HepG2 (cell line): ENCODE measurements at regions of chr20 and their contacts with region 1.

Region 1: DNA sequence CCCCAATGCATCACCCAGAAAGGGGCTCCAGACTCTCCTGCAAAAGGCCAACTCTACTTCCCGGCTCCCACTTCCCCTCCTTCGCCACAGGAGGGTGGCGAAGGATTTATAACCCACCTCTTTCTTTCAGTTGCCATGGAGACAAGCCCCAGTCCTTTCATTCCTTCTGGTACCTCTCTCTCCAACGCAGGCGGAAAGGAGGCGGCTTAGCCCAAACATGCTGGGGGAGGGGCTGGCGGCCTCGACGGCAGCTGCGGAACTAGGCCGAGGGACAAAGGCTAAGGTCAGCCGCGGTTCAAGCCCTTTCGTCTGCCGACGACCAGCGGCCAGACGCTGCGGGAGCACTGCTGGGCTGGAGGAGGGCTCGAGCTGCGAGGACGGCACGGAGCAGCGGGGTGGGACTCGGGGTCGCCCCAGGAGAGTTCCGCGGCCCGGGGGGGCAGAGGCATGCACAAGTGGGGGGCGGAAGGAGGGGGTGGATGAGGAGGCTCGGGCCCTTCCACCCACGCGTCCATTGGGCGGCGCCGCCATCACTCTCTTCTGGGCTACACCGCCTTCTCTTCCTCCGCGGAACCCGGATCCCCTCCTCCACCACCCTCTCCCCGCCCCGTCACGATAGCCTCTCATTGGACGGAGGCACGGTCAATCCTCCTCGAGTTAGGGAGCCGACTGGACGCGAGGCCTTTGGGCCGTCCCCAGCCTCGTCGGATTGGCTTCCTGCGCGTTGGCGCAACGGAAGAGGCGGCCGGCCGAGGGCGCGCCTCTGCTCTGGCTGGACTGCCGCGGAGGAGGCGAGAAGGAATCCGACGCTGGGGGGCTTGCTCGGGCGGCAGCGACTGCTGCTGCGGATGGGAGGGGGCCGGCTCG is at the start of gene PANK2:
- DNase-seq: peak; percentile 99
- ATAC-seq: peak; percentile 97
- H3K4me3 ChIP-seq: peak within 1 kb of the TSS; percentile 86 to 94 (median 94)
- H3K27ac ChIP-seq: peak within 1 kb of the TSS; percentile 86
- H3K4me1 ChIP-seq: peaks cover 46% of the 10 kb centered on the region
- H3K27me3 ChIP-seq: no peaks in the 10 kb centered on the region; a peak in 1 of 5 replicates
- CTCF ChIP-seq: peak; percentile 65
- EP300 ChIP-seq: peak in 1 of 2 experiments; percentile 42; a peak in 1 of 4 replicates
- POLR2A ChIP-seq: peak; percentile 88 to 89
- RAD21 ChIP-seq: peak; percentile 78
- total RNA-seq, gene PANK2: 123 and 127 TPM in 2 replicates

Region 2: DNA sequence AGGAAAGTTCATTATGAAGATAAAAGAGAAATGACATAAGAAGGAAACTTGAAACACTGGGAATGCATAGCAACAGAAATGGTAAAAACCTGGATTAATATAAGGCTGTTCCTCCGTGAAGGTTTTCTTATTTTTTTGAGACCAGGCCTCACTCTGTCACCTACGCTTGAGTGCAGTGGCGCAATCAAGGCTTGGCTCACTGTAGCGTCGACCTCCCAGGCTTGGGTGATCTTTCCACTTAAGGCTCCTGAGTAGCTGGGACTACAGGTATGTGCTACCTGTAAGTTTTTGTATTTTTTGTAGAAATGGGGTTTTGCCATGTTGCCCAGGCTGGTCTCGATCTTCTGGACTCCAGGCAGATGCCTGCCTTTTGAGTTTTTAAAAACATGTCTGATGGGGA is 52.0 kb after region 1 on chr20:
- CTCF ChIA-PET with region 1: no interaction called
- POLR2A ChIA-PET with region 1: no interaction called
- in situ Hi-C with region 1: loop called (anchors 10 kb)
- intact Hi-C with region 1: no loop called
- DNase-seq: no peak
- ATAC-seq: no peak
- H3K4me3 ChIP-seq: no peak overlapping the region
- H3K27ac ChIP-seq: no peak overlapping the region
- H3K4me1 ChIP-seq: no peaks in the 10 kb centered on the region
- H3K27me3 ChIP-seq: no peaks in the 10 kb centered on the region
- CTCF ChIP-seq: no peak
- EP300 ChIP-seq: no peak
- POLR2A ChIP-seq: no peak
- RAD21 ChIP-seq: no peak

Region 3: DNA sequence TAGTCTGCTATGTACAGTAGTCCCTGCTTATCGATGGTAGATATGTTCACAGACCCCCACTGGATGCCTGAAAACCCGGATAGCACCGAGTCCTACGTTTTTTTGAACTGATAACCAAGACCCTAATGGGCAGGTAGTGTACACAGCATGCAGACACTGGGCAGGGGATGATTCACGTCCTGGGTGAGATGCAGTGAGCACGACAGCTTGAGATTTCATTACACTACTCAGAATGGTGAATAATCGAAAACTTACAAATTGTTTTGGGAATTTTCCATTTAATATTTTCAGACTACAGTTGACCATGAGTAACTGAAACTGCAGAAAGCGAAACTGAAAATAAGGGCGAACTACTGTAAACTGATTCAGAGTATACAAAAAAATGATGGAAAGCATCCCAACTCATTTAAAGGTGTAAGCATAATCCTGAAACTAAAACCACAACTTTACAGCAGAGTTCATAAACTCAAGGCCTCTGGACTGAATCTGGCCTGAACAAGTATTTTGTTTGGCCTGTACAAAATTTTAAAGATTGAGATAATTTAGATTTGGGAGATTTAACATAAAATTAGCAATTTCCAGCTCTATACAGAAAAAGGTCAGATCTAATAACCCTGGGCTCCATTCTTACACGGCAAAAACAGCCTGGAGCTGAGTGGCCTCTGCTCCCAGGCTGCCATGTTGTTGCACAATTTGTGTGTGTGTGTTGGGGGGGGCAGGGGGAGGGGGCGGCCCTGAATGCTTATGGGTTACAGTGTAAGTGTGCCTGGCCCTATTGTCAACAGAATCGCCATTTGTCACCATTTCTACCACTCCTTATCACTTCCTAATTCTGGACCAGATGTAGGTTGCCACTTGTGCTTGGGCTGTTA is 91.6 kb after region 1 on chr20:
- CTCF ChIA-PET with region 1: no interaction called
- POLR2A ChIA-PET with region 1: no interaction called
- in situ Hi-C with region 1: no loop called
- intact Hi-C with region 1: no loop called
- DNase-seq: peak; percentile 80
- ATAC-seq: peak; percentile 96
- H3K4me3 ChIP-seq: peak overlapping the region; percentile 44 to 56 (median 52)
- H3K27ac ChIP-seq: peak overlapping the region; percentile 70
- H3K4me1 ChIP-seq: peaks cover 18% of the 10 kb centered on the region
- H3K27me3 ChIP-seq: no peaks in the 10 kb centered on the region
- CTCF ChIP-seq: 0 out of 2 replicates have a peak, but pooled peaks have one; percentile 6
- EP300 ChIP-seq: peak; percentile 11 to 67; a peak in 2 of 4 replicates
- POLR2A ChIP-seq: peak; percentile 57 to 75; a peak in 3 of 4 replicates
- RAD21 ChIP-seq: no peak